Panc1 (cell line): ENCODE measurements at regions of chr11 and their contacts with region 1.

Region 1: GRCh38 chr11:43979571-43980190 is 37.2 kb downstream of the C11orf96 start:
- DNase-seq: no peak
- ATAC-seq: no peak
- H3K4me3 ChIP-seq: no peak overlapping the region
- H3K27ac ChIP-seq: no peak overlapping the region
- H3K4me1 ChIP-seq: no peaks in the 10 kb centered on the region
- H3K27me3 ChIP-seq: peaks cover 6% of the 10 kb centered on the region; the same call in 1 of the 2 replicates
- CTCF ChIP-seq: no peak

Region 2: DNA sequence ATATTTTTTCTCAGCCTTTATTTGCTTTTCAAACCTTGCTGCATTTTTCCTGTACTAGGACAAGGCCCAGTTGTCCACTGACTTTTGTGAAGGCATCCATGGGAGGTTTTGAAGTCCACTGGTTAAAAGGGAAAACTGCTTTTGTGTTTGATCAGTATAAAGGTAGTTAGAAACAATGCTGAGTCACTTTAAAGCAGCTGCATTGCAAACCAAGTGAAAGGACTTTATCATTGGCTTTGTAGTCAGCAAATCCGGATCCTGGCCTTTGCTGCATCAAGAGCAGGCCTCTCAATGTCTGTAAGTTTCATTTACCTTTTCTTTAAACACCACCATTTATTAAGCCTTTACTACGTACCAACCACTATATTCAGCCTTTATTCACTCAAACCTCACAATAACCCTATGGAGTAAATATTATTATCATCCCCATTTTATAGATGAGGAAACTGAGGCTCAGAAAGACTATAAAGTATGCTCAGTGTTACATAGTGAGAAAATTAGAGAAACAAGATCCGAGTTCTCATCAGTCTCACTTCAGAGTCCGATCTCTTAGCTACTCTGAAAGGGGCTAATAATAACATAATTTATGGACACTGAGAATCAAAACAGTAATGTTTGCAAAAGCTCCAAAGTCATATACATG is 359.7 kb before region 1 on chr11:
- CTCF ChIA-PET with region 1: no interaction called
- POLR2A ChIA-PET with region 1: interaction called, 11 read pairs
- in situ Hi-C with region 1: no loop called
- intact Hi-C with region 1: no loop called
- DNase-seq: no peak
- ATAC-seq: no peak
- H3K4me3 ChIP-seq: no peak overlapping the region
- H3K27ac ChIP-seq: no peak overlapping the region
- H3K4me1 ChIP-seq: no peaks in the 10 kb centered on the region
- H3K27me3 ChIP-seq: peaks cover 7% of the 10 kb centered on the region; the same call in 1 of the 2 replicates
- CTCF ChIP-seq: no peak

Region 3: DNA sequence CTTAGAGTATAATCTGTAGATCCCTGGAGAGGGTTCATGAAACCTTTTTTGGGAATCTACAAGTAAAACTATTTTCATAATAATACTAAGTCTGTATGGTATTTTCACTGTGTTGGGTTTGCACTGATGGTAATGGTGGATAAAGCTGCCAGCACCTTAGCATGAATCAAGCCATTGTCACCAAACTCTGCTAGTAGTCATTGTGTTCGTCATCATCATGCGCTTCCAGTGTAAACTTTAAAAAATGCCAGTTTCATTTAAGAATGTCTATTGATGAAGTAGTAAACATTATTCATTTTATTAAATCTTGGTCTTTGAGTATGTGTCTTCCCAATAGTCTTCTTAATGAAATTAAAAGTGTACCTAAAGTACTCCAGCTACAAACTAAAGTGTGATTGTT is 84.1 kb before region 1 on chr11:
- CTCF ChIA-PET with region 1: no interaction called
- POLR2A ChIA-PET with region 1: no interaction called
- in situ Hi-C with region 1: no loop called
- intact Hi-C with region 1: no loop called
- DNase-seq: no peak
- ATAC-seq: no peak
- H3K4me3 ChIP-seq: no peak overlapping the region
- H3K27ac ChIP-seq: no peak overlapping the region
- H3K4me1 ChIP-seq: no peaks in the 10 kb centered on the region
- H3K27me3 ChIP-seq: no peaks in the 10 kb centered on the region
- CTCF ChIP-seq: no peak